Activated naive CD4-positive, alpha-beta T cell treated with anti-CD3 and anti-CD28 coated beads for 36 hours (primary cell): ENCODE measurements at regions of chr19 and their contacts with region 1.

Region 1: GRCh38 chr19:55624109-55625003 is at the start of gene ZNF784:
- DNase-seq: peak; percentile 93
- H3K4me3 Mint-ChIP-seq: peak within 1 kb of the TSS; percentile 92
- H3K27ac Mint-ChIP-seq: peak within 1 kb of the TSS; percentile 95
- H3K4me1 Mint-ChIP-seq: peaks cover 56% of the 10 kb centered on the region
- H3K27me3 Mint-ChIP-seq: no peaks in the 10 kb centered on the region
- total RNA-seq, gene ZNF784: 3.7 to 4.0 TPM

Region 2: GRCh38 chr19:55279770-55280643 is 344.3 kb before region 1 on chr19 and contains the start of gene HSPBP1:
- CTCF ChIA-PET with region 1: no interaction called
- intact Hi-C with region 1: loop called (anchors 1 kb)
- DNase-seq: peak; percentile 97
- H3K4me3 Mint-ChIP-seq: peak within 1 kb of the TSS; percentile 100
- H3K27ac Mint-ChIP-seq: peak within 1 kb of the TSS; percentile 93
- H3K4me1 Mint-ChIP-seq: peaks cover 28% of the 10 kb centered on the region
- H3K27me3 Mint-ChIP-seq: no peaks in the 10 kb centered on the region
- total RNA-seq, gene HSPBP1: 44.3 to 45.0 TPM

Region 3: DNA sequence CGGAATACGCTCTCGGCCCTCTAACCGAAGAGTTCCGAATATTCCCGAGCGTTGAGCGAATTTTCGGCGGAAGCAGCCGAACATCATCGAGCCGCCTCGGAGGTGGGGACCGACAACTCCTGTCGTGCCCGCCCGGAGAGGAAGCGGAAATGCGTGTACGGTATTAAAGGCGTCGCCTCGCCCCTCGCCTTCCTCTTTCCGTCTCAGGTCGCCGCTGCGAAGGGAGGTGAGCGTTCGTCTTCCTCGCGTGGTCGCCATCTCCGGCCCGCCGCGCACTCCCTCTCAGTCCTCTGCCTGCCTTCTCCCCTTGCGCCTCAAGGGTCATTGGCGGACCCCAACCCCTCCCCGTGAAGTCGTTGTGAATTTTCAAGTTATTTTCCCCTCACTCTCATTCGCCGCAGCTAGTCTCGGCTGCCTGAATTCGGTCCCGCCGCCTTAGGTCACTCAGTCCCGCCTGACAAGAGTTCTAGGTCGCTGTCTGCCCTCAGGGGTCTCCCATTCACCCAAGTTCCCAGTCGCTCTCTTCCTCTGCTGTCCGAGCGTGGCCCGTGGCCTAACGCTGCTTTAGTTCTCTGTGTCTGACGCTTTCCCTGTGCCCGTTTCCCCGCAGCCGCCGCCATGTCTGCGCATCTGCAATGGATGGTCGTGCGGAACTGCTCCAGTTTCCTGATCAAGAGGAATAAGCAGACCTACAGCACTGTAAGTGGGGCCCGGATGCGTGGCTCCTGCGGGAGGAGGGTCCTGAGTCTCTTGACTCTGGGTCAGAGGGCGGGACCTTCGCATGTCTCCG is 238.4 kb before region 1 on chr19 and contains the start of gene RPL28:
- CTCF ChIA-PET with region 1: no interaction called
- intact Hi-C with region 1: no loop called
- DNase-seq: peak; percentile 99
- H3K4me3 Mint-ChIP-seq: peak within 1 kb of the TSS; percentile 100
- H3K27ac Mint-ChIP-seq: peak within 1 kb of the TSS; percentile 97
- H3K4me1 Mint-ChIP-seq: peaks cover 59% of the 10 kb centered on the region
- H3K27me3 Mint-ChIP-seq: no peaks in the 10 kb centered on the region
- total RNA-seq, gene RPL28: 3,327 to 3,354 TPM

Region 4: DNA sequence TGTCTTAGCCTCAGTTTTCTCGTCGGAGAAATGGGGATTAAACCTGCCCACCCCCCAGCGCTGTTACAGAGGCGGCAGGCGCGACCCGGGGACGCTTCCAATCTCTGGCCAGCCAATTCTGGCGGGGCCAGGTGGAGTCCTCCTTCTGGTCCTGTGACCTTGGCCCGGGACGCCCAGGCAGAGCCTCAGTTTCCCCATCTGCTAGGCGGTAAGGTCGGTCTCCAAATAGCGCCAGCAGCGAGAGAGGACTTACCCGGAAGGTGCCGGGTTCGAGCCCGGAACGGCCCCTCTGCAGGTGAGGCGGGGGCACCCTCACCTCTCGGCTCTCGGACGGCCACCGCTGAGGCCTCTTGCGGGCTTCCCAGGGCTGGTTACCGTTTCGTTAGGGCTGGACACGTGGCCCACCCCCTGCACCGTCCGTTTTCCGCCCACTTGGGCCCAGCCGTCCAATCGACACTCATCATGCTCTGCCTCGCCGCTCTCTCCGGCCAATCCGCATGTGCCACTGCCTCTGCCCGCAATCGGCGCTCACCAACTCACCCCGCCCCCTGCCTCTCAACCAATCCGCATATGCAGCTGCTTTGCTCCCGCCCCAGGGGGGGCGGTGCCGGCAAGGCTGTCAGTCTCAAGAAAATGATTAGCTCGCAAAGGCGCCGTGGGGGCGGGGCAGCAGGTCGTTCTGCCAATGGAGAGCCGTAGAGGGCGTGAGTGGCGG is 162.9 kb before region 1 on chr19 and contains the start of gene ISOC2:
- CTCF ChIA-PET with region 1: interaction called, 9 read pairs
- intact Hi-C with region 1: loop called (anchors 1 kb)
- DNase-seq: peak; percentile 100
- H3K4me3 Mint-ChIP-seq: peak within 1 kb of the TSS; percentile 93
- H3K27ac Mint-ChIP-seq: peak within 1 kb of the TSS; percentile 77
- H3K4me1 Mint-ChIP-seq: peaks cover 20% of the 10 kb centered on the region
- H3K27me3 Mint-ChIP-seq: no peaks in the 10 kb centered on the region
- total RNA-seq, gene ISOC2: 18.6 to 20.5 TPM

Region 5: DNA sequence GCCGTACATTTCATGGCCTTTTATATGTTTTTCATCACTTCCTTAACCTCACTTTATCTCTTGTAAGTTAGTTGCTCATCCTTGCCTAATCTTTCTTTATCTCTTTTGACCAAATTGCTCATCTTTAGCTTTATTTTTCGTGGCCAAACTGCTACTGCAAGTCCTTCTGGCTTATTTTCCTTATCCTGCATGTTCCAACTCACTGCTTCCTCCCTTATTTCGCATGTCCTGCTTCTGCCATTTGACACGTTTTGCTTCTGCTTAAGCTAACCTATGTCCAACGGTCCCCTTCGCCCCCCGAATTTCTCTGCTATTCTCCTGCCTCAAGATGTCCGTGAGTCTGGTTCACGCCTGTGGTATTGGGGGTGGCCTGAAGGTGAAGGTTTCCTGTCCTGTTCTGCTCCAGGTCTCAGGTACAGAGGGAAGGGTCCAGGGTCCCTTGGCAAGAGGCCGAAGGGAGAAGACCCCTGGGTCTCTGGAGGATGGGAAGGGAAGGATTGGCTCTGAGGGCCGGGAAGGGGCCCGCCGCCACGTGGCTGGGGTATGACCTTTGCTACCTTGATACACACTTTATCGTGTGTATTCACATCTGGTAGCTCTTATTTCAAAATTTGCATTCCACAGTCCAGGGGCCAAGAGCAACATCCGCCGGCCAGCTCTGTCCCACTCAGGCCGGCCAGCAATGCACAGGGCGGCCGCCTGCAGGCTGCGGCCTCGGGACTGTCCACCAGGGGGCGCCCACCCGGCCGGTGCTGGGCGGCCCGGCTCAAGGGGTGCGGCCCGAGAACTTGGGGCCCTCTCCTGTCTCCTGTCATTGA is 156.9 kb before region 1 on chr19:
- CTCF ChIA-PET with region 1: interaction called, 9 read pairs
- intact Hi-C with region 1: loop called (anchors 2 kb)
- DNase-seq: peak; percentile 58
- H3K4me3 Mint-ChIP-seq: no peak overlapping the region
- H3K27ac Mint-ChIP-seq: no peak overlapping the region
- H3K4me1 Mint-ChIP-seq: peaks cover 2% of the 10 kb centered on the region
- H3K27me3 Mint-ChIP-seq: no peaks in the 10 kb centered on the region

Region 6: GRCh38 chr19:55586976-55587668 is 37.2 kb before region 1 on chr19:
- CTCF ChIA-PET with region 1: no interaction called
- intact Hi-C with region 1: loop called (anchors 1 kb)
- DNase-seq: peak; percentile 98
- H3K4me3 Mint-ChIP-seq: peak overlapping the region; percentile 77
- H3K27ac Mint-ChIP-seq: no peak overlapping the region
- H3K4me1 Mint-ChIP-seq: peaks cover 25% of the 10 kb centered on the region
- H3K27me3 Mint-ChIP-seq: no peaks in the 10 kb centered on the region